Activated T-helper 2 cell treated with anti-CD3 and anti-CD28 coated beads, Interferon-gamma antibody, Interleukin-2, Interleukin-4, amounts not matched to agents 10 μg/mL and 5 μg/mL and 100 μg/mL, durations not matched to agents 14 hours and 24 hours and 36 hours (primary cell): ENCODE measurements at regions of chr11 and their contacts with region 1.

Region 1: DNA sequence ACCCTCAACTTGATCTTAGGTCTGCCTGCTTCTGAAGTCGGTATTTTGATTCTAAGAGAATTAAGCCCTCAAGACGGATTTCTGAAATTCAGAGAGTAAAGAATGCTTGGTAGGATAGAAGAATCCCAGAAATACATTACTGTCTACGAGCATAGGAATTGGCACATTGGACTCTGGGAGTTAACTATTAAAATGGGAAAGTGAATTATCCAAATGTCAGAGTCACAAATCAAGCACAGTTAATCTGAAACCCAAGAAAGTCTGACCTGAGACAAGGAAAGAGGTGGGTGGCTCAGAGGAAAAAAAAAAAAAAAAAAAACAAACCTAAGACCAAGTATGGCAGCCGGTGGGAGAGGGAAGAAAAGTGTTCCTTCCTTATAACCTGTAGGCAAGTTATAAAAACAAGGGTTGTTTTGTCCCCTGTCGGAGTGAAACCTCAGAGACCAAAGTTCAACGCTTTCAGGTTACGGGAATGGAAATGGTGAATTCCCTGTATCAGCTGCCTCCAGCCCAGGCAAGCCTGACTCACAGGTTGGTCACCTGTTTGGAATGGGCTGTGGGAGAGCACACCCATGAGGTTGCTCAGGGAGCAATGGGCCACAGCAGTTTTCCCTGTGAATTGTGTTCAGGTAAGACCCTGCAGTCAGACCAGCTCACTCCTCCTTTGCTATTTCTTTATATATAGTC is 139.0 kb downstream of the ETS1 start:
- DNase-seq: no peak
- H3K4me3 Mint-ChIP-seq: no peak overlapping the region
- H3K27ac Mint-ChIP-seq: no peak overlapping the region
- H3K4me1 Mint-ChIP-seq: peaks cover 40% of the 10 kb centered on the region
- H3K27me3 Mint-ChIP-seq: no peaks in the 10 kb centered on the region

Region 2: GRCh38 chr11:128261011-128261421 is 187.3 kb before region 1 on chr11:
- intact Hi-C with region 1: no loop called
- DNase-seq: no peak
- H3K4me3 Mint-ChIP-seq: no peak overlapping the region
- H3K27ac Mint-ChIP-seq: no peak overlapping the region
- H3K4me1 Mint-ChIP-seq: peaks cover 2% of the 10 kb centered on the region
- H3K27me3 Mint-ChIP-seq: peaks cover 11% of the 10 kb centered on the region

Region 3: DNA sequence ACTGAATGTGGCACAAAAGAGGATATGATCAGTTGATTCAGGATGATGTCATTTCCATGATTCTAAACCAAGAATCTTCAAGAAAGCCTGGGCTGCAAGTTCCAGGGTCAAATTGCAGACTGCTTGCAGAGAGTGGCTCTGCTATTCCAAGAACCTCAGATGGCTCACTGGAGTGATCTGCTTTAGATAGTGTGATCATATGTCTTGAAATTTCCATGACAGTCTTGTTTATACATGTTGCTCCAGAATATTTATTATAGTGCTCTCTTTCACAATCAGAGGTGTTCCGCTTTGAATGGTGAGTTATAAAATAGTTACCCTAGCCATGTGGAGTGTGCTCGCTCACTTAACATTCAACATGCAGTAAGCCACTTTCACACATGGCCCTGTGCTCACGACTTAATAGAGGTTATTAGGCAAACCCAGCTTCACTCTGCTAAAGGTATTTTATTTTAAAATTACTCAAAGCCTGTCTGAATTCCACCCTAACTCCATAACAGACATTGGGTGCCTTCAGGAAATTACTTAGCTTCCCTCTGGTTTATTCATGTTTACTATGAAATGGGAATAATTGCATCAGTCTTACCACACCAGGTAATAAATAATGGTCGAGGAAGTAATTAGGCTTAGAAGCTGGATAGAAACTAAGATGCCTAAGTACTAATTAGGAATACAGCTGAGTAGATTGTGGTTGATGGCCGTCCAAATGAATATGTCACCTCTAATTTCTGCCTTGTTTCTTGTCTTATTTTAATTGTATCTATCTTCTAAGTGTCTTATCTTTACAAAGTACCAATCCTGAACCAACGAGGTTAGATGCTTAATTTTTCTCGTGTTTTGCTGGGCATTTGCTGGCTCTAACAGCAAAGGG is 48.9 kb before region 1 on chr11:
- intact Hi-C with region 1: loop called (anchors 10 kb)
- DNase-seq: no peak
- H3K4me3 Mint-ChIP-seq: no peak overlapping the region
- H3K27ac Mint-ChIP-seq: no peak overlapping the region
- H3K4me1 Mint-ChIP-seq: peaks cover 16% of the 10 kb centered on the region
- H3K27me3 Mint-ChIP-seq: no peaks in the 10 kb centered on the region